ENCODE measurements at regions of chr5 and their contacts with region 1.

Region 1: DNA sequence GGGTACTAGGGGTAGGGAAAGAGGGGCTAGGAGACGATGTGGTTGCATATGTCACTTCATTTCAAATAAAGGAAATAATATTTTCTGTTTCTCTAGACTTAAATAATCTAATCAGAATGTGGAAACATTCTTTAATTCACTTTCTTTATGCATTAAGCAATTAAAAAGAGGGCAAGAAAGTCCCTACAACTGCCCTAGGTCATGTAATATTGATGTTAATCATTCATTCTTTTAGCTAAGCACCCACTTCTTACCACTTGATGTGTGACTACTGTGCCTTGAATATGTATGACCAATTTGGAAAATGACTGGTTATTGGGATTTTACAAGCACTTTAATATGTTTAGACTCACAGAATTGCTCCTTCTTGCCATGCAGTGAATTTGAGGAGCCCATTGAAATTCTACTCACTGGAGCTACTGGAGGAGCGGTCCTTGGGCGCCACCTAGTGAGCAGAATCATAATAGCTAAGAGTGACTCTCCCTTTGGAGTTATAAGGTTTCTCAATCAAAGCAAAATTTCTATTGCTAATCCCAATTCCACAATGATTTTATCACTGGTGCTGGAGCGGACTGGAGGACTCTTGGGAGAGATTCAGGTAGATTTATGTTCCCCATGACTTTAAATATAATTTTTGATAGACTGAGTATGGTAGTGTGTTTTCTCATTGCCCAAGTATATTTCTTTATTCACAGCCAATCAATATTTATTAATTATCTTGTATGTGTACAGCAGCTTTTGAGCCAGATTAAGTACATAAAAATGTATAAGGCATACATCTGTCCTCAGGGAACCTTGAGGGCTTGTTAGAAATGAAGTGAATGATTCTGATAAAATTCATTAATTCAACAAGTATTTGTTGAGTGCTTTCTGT is 225.1 kb downstream of the ADGRV1 start:
- DNase-seq: peak; percentile 80
- ATAC-seq: peak; percentile 80
- H3K4me3 Mint-ChIP-seq: no peak overlapping the region
- H3K27ac Mint-ChIP-seq: no peak overlapping the region
- H3K4me1 Mint-ChIP-seq: no peaks in the 10 kb centered on the region
- H3K27me3 Mint-ChIP-seq: peaks cover 7% of the 10 kb centered on the region
- CTCF ChIP-seq: peak; percentile 96

Region 2: GRCh38 chr5:90438100-90438499 is 345.6 kb before region 1 on chr5:
- CTCF ChIA-PET with region 1: interaction called, 12 read pairs
- POLR2A ChIA-PET with region 1: no interaction called
- intact Hi-C with region 1: loop called (anchors 5 kb)
- DNase-seq: no peak
- ATAC-seq: no peak
- H3K4me3 Mint-ChIP-seq: no peak overlapping the region
- H3K27ac Mint-ChIP-seq: no peak overlapping the region
- H3K4me1 Mint-ChIP-seq: peaks cover 5% of the 10 kb centered on the region
- H3K27me3 Mint-ChIP-seq: no peaks in the 10 kb centered on the region
- CTCF ChIP-seq: no peak

Region 3: GRCh38 chr5:90709323-90710155 is 74.2 kb before region 1 on chr5:
- CTCF ChIA-PET with region 1: interaction called, 16 read pairs
- POLR2A ChIA-PET with region 1: no interaction called
- intact Hi-C with region 1: no loop called
- DNase-seq: peak; percentile 31
- ATAC-seq: no peak
- H3K4me3 Mint-ChIP-seq: no peak overlapping the region
- H3K27ac Mint-ChIP-seq: no peak overlapping the region
- H3K4me1 Mint-ChIP-seq: no peaks in the 10 kb centered on the region
- H3K27me3 Mint-ChIP-seq: peaks cover 8% of the 10 kb centered on the region
- CTCF ChIP-seq: peak; percentile 21

Measured in activated CD8-positive, alpha-beta T cell treated with anti-CD3 and anti-CD28 coated beads for 36 hours (primary cell).